ENCODE measurements at regions of chr7 and their contacts with region 1.

Region 1: GRCh38 chr7:151143261-151144015 is 24.1 kb downstream of the GBX1 start:
- DNase-seq: no peak
- H3K4me3 ChIP-seq: no peak overlapping the region
- H3K27ac ChIP-seq: no peak overlapping the region
- H3K4me1 ChIP-seq: peaks cover 25% of the 10 kb centered on the region
- H3K27me3 ChIP-seq: no peaks in the 10 kb centered on the region
- CTCF ChIP-seq: no peak

Region 2: GRCh38 chr7:151046603-151047504 is 96.6 kb before region 1 on chr7:
- CTCF ChIA-PET with region 1: no interaction called
- dilution Hi-C with region 1: loop called (anchors 5 kb)
- in situ Hi-C with region 1: no loop called
- intact Hi-C with region 1: no loop called
- DNase-seq: no peak
- H3K4me3 ChIP-seq: no peak overlapping the region
- H3K27ac ChIP-seq: no peak overlapping the region
- H3K4me1 ChIP-seq: peaks cover 5% of the 10 kb centered on the region
- H3K27me3 ChIP-seq: no peaks in the 10 kb centered on the region
- CTCF ChIP-seq: no peak

Region 3: DNA sequence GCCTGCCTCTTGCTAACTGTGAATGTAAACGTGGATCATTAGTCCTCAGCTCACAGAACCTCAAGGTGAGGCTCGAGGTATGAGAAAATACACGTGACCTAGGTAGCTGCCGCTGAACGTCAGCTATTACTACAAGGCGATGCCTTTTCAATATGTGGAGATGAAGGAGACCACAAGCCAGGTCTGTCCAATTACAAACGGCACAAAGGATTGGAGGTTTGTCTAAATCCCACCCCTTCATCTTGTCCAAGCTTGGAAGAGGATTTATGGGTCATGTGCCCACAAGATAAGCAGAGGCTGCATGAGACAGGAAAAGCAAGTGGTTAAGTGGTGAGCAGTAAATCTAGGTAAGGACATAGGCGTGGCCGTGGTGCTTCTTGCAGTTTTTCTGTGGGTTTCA is 63.5 kb after region 1 on chr7:
- CTCF ChIA-PET with region 1: interaction called, 5 read pairs
- dilution Hi-C with region 1: loop called (anchors 5 kb)
- in situ Hi-C with region 1: no loop called
- intact Hi-C with region 1: no loop called
- DNase-seq: peak; percentile 9
- H3K4me3 ChIP-seq: no peak overlapping the region
- H3K27ac ChIP-seq: no peak overlapping the region
- H3K4me1 ChIP-seq: no peaks in the 10 kb centered on the region
- H3K27me3 ChIP-seq: no peaks in the 10 kb centered on the region
- CTCF ChIP-seq: no peak